ENCODE measurements at regions of chr6 and their contacts with region 1.

Region 1: GRCh38 chr6:52049252-52050050 is 38.0 kb downstream of the PKHD1 start:
- DNase-seq: peak in 4 of 5 donors; percentile 11 to 26 (median 18)
- H3K4me3 ChIP-seq: no peak overlapping the region
- H3K4me3 Mint-ChIP-seq: no peak overlapping the region
- H3K27ac ChIP-seq: no peak overlapping the region
- H3K27ac Mint-ChIP-seq: no peak overlapping the region
- H3K4me1 ChIP-seq: no peaks in the 10 kb centered on the region
- H3K4me1 Mint-ChIP-seq: no peaks in the 10 kb centered on the region
- H3K27me3 ChIP-seq: peaks cover 6% of the 10 kb centered on the region
- H3K27me3 Mint-ChIP-seq: peaks cover 18 to 27% of the 10 kb centered on the region in 2 donors

Region 2: DNA sequence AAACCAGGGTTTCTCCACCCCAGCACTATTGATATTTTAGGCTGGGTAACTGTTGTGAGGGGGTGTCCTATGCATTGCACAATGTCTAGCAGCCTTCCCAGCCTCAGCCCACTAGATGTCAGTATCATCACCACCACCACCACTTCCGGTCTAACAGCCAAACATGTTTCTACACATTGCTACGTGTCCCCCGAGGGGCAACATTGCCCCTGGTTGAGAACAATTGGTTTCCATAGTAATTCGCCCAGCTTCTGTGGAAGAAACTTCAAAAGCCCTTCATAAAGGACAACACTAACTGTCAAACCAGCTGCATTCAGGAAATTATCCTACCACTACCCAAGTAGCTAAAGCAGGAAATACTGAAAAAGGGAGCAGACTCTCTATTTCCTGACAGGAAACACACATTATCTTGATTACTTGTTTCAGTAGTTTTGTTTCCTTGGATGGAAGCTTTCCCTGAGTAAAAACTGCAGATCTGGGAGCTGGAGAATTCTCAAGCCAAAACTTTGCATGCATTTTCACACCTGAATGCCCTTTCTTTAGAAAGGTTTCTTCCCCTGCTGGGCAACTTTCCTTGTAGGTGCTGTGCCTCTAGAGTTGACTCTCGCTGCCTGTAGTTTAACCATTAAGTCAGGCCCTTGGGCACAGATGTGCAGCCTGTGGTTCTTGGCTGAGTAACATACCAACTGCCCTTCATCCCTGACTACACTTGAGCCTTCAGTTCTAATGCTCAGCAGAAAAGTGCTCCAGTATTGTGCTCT is 14.3 kb after region 1 on chr6:
- CTCF ChIA-PET with region 1: interaction called, 84 read pairs
- POLR2A ChIA-PET with region 1: no interaction called
- intact Hi-C with region 1: no loop called
- DNase-seq: peak; percentile 59 to 68 (median 60)
- H3K4me3 ChIP-seq: peak overlapping the region in 1 of 2 donors; percentile 36
- H3K4me3 Mint-ChIP-seq: peak overlapping the region; percentile 80 to 92 (median 86)
- H3K27ac ChIP-seq: no peak overlapping the region
- H3K27ac Mint-ChIP-seq: peak overlapping the region; percentile 30 to 96 (median 80)
- H3K4me1 ChIP-seq: peaks cover 14% of the 10 kb centered on the region
- H3K4me1 Mint-ChIP-seq: peaks cover 11 to 14% (median 12%) of the 10 kb centered on the region in 4 donors
- H3K27me3 ChIP-seq: no peaks in the 10 kb centered on the region
- H3K27me3 Mint-ChIP-seq: peaks cover 0 to 2% of the 10 kb centered on the region in 2 donors